ENCODE measurements at regions of chr12 and their contacts with region 1.

Region 1: DNA sequence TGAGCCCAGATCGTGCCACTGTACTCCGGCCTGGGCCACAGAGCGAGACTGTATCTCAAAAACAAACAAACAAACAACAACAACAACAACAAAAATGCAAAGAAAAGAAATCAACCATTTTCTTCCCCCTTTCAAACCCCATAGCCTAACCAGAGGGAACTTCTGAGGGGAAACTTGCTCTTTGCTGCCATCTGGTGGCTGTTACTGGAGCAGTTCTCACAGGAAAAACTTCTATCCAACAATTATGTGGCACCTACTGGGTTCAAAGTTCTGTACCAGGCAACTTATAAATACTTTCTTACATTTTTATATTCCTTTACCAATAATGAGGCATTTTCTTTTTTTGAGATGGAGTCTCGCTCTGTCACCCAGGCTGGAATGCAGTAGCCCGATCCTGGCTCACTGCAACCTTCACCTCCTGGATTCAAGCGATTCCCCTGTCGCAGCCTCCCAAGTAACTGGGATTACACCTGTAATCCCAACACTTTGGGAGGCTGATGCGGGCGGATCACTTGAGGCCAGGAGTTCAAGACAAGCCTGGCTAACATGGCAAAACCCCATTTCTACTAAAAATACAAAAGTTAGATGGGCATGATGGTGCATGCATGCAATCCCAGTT is 50.9 kb upstream of the BICDL1 start:
- DNase-seq: peak; percentile 86
- ATAC-seq: peak; percentile 22; the same call in 1 of the 2 replicates
- H3K4me3 ChIP-seq: no peak overlapping the region
- H3K27ac ChIP-seq: no peak overlapping the region
- H3K4me1 ChIP-seq: peaks cover 14% of the 10 kb centered on the region
- H3K27me3 ChIP-seq: no peaks in the 10 kb centered on the region
- CTCF ChIP-seq: peak; percentile 85

Region 2: GRCh38 chr12:119804011-119804641 is 134.0 kb before region 1 on chr12:
- CTCF ChIA-PET with region 1: no interaction called
- POLR2A ChIA-PET with region 1: no interaction called
- intact Hi-C with region 1: loop called (anchors 10 kb)
- DNase-seq: peak; percentile 87
- ATAC-seq: peak; percentile 94
- H3K4me3 ChIP-seq: no peak overlapping the region
- H3K27ac ChIP-seq: no peak overlapping the region
- H3K4me1 ChIP-seq: peaks cover 30% of the 10 kb centered on the region
- H3K27me3 ChIP-seq: no peaks in the 10 kb centered on the region
- CTCF ChIP-seq: peak; percentile 86

Region 3: DNA sequence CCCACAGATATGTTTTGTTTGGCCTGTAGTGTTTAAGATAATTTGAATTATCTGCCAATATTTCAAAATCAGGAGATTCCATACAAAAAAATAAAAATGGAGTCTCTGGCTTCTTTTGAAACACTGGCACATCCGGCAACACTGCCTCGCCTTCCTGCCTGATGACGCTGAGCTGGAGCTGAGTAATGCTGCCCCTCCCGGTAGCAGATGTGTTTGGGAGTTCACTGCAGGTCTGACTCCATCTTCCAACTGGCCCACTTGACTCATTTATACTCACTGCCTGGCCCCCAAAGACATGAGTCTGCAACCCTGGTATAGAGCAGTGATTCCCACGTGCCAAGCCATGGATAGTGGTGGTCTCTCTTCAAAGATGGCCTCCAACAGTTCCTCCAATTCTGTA is 68.4 kb before region 1 on chr12:
- CTCF ChIA-PET with region 1: no interaction called
- POLR2A ChIA-PET with region 1: no interaction called
- intact Hi-C with region 1: no loop called
- DNase-seq: peak; percentile 80
- ATAC-seq: peak; percentile 92
- H3K4me3 ChIP-seq: no peak overlapping the region
- H3K27ac ChIP-seq: peak overlapping the region; percentile 72
- H3K4me1 ChIP-seq: peaks cover 13% of the 10 kb centered on the region
- H3K27me3 ChIP-seq: no peaks in the 10 kb centered on the region
- CTCF ChIP-seq: peak; percentile 0; the same call in 1 of the 2 replicates

Region 4: GRCh38 chr12:120012067-120012621 is 74.0 kb after region 1 on chr12:
- CTCF ChIA-PET with region 1: no interaction called
- POLR2A ChIA-PET with region 1: no interaction called
- intact Hi-C with region 1: loop called (anchors 2 kb)
- DNase-seq: peak; percentile 70
- ATAC-seq: peak; percentile 80
- H3K4me3 ChIP-seq: no peak overlapping the region
- H3K27ac ChIP-seq: no peak overlapping the region
- H3K4me1 ChIP-seq: peaks cover 15% of the 10 kb centered on the region
- H3K27me3 ChIP-seq: no peaks in the 10 kb centered on the region
- CTCF ChIP-seq: no peak

Region 5: DNA sequence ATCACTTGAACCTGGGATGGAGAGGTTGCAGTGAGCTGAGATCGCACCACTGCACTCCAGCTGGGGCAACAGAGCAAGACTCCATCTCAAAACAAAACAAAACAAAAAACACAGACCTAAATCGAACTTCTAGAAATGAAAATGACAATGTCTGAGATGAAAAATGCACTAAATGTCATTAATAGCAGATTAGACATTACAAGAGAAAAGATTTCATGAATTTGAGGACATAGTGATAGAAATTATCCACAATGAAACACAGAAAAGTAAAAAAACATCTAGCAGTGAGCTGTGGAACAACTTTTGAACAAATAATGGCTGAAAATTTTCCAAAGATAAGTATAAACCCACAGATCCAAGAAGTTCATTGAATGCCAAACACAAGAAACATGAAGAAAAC is 86.0 kb after region 1 on chr12:
- CTCF ChIA-PET with region 1: no interaction called
- POLR2A ChIA-PET with region 1: no interaction called
- intact Hi-C with region 1: no loop called
- DNase-seq: no peak
- ATAC-seq: no peak
- H3K4me3 ChIP-seq: no peak overlapping the region
- H3K27ac ChIP-seq: no peak overlapping the region
- H3K4me1 ChIP-seq: peaks cover 6% of the 10 kb centered on the region; the same call in 1 of the 2 replicates
- H3K27me3 ChIP-seq: no peaks in the 10 kb centered on the region
- CTCF ChIP-seq: no peak

Region 6: DNA sequence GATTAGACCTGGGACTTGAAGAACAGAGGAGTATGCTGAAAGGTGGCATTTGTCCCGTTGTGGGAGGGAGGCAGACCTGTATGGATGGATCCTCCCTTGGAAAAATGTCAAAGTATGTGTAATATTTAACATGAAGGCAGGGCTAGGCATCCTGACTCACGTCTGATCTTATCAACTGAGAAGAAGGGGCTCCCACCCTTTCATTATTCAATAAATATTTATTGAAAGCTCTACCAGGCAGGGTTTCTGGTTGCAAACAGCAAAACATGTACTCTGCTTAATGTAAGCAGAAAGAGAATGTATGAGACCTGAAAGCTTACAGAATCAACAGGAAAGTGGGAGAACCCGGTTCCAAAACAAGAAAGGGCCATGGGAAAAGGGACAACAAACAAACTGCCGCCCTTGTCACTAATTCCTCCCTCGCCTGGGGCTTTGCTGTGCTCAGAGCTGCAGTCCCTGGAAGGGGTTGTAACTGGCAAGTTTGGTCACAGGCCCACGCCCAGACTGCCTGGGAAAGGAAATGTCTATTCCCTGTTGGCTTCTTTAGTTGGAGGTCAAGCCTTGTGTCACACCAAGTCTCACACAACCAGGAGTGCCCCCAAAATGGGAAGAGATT is 141.4 kb after region 1 on chr12:
- CTCF ChIA-PET with region 1: no interaction called
- POLR2A ChIA-PET with region 1: no interaction called
- intact Hi-C with region 1: loop called (anchors 2 kb)
- DNase-seq: peak; percentile 98
- ATAC-seq: peak; percentile 91
- H3K4me3 ChIP-seq: peak overlapping the region; percentile 27
- H3K27ac ChIP-seq: peak overlapping the region; percentile 95
- H3K4me1 ChIP-seq: peaks cover 28% of the 10 kb centered on the region
- H3K27me3 ChIP-seq: no peaks in the 10 kb centered on the region
- CTCF ChIP-seq: no peak

Region 7: GRCh38 chr12:121026274-121027045 is 1088.3 kb after region 1 on chr12:
- CTCF ChIA-PET with region 1: no interaction called
- POLR2A ChIA-PET with region 1: no interaction called
- intact Hi-C with region 1: no loop called
- DNase-seq: no peak
- ATAC-seq: peak; percentile 45
- H3K4me3 ChIP-seq: no peak overlapping the region
- H3K27ac ChIP-seq: no peak overlapping the region
- H3K4me1 ChIP-seq: peaks cover 3% of the 10 kb centered on the region; the same call in 1 of the 2 replicates
- H3K27me3 ChIP-seq: no peaks in the 10 kb centered on the region
- CTCF ChIP-seq: no peak; the same call in 1 of the 2 replicates